ENCODE measurements at regions of chr12 and their contacts with region 1.

Region 1: GRCh38 chr12:49060237-49061156 is at the start of gene KMT2D:
- H3K4me3 ChIP-seq: peak within 1 kb of the TSS; percentile 95
- H3K27ac ChIP-seq: peak within 1 kb of the TSS; percentile 93
- H3K4me1 ChIP-seq: peaks cover 11% of the 10 kb centered on the region
- CTCF ChIP-seq: peak; percentile 94

Region 2: DNA sequence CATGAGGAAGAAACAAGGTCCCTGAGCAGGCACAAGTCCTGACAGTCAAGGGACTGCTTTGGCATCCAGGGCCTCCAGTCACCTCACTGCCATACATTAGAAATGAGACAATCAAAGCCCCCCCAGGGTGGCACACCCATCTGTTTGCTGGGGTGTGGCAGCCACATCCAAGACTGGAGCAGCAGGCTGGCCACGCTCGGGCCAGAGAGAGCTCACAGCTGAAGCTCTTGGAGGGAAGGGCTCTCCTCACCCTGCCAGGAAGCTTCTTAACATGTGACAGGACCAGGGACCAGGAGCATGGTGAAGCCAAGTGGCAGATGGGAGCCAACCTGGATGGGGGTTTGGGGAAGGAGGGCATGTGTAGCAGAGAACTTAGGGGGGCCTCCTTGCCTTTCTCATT is 232.2 kb before region 1 on chr12:
- CTCF ChIA-PET with region 1: no interaction called
- POLR2A ChIA-PET with region 1: no interaction called
- H3K4me3 ChIP-seq: no peak overlapping the region
- H3K27ac ChIP-seq: no peak overlapping the region
- H3K4me1 ChIP-seq: no peaks in the 10 kb centered on the region
- CTCF ChIP-seq: no peak

Region 3: DNA sequence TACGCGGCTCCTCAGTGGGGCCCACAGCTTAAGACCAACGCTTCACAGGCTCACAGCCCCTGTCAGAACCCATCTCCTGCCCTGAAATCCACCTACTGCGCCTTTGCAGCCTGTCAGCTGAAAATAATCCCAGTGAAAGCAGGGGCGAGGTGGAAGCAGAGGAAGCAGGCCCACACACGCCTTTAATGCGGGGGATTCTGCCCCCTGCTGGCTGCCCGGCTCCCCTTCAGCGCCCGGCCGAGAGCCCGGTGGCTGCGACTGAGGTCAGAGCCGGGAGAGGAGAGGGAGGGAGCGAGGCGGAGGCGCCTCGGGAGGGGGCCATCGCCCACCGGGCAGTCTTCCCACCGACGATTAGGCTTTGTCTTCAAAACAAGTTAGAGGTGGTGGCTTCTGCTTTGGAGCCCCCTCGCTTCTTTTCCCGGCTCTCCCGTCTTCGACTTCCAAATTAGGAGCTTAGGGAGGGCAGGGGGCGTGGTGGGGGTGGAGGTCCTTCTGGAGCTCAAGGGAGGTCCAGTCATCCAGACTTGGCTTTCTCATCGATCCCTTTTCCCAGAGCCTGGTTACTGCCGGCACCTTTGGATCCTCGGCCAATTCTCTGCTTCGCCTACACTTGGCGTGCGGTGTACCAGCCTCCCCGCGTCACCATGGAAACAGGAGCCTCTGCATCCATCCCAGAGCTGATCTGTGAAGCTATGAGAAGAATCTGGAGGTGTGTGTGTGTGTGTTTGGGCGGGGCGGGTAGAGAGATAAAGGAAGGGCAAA is 169.7 kb before region 1 on chr12:
- CTCF ChIA-PET with region 1: no interaction called
- POLR2A ChIA-PET with region 1: no interaction called
- H3K4me3 ChIP-seq: peak overlapping the region; percentile 20
- H3K27ac ChIP-seq: no peak overlapping the region
- H3K4me1 ChIP-seq: no peaks in the 10 kb centered on the region
- CTCF ChIP-seq: peak; percentile 95

Region 4: GRCh38 chr12:48943221-48943620 is 117.3 kb before region 1 on chr12:
- CTCF ChIA-PET with region 1: no interaction called
- POLR2A ChIA-PET with region 1: no interaction called
- H3K4me3 ChIP-seq: no peak overlapping the region
- H3K27ac ChIP-seq: no peak overlapping the region
- H3K4me1 ChIP-seq: no peaks in the 10 kb centered on the region
- CTCF ChIP-seq: no peak

Region 5: DNA sequence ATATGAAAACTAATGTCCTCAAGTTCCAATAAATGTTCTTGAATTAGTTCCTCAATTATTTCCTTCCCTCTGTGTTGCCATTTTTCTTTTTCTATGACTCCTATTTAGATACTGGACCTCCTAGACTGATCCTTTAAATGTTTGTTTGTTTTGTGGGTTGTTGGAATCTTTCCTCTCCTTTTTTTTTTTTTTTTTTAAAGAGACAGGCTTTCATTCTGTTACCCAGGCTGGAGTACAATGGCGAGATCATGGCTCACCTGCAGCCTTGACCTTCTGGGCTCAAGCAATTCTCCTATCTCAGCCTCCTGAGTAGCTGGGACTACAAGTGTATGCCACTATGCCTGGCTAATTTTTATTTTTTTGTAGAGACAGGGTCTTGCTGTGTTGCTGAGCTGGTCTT is 51.6 kb before region 1 on chr12:
- CTCF ChIA-PET with region 1: no interaction called
- POLR2A ChIA-PET with region 1: no interaction called
- H3K4me3 ChIP-seq: no peak overlapping the region
- H3K27ac ChIP-seq: no peak overlapping the region
- H3K4me1 ChIP-seq: peaks cover 5% of the 10 kb centered on the region
- CTCF ChIP-seq: no peak

Region 6: DNA sequence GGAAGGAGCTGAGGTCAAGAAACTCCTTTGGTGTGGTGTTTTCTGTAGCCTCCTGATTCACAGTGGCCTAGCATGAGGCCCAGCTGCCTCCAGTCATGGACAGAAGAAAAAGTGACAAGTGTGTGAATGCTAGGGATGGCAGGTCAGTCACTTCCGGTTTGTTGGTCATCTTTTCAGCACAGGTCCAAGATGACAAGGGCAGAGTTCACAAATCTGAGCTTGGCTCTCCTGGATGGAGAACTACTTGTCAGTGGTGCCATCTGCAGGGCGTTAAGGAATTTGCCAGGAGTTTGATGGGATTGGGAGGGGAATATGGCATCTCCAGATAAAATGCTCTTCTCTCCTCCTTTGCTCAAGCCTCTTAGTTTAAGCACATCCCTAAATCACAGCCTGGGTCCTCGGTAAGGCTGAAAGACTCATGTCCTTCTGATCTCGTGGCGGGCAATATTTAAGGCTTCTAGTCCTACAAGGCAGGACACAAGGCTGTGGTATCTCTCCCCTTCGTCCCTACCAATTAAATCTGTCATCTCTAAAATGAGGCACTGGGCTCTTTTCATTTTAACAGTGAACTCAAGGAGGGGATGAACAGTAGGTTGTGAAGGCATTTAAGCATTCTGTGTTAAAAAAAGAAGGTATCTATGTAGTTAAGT is 60.7 kb after region 1 on chr12:
- CTCF ChIA-PET with region 1: interaction called, 63 read pairs
- POLR2A ChIA-PET with region 1: interaction called, 6 read pairs
- H3K4me3 ChIP-seq: no peak overlapping the region
- H3K27ac ChIP-seq: no peak overlapping the region
- H3K4me1 ChIP-seq: no peaks in the 10 kb centered on the region
- CTCF ChIP-seq: peak; percentile 51; the same call in 1 of the 2 replicates

Measured in HEK293 (cell line).